ENCODE measurements at regions of chr12 and their contacts with region 1.

Region 1: GRCh38 chr12:22046090-22046967 is at the start of gene CMAS:
- DNase-seq: peak; percentile 62 to 78
- H3K4me3 ChIP-seq: peak within 1 kb of the TSS; percentile 60
- H3K27ac ChIP-seq: peak within 1 kb of the TSS; percentile 80
- H3K4me1 ChIP-seq: peaks cover 57% of the 10 kb centered on the region
- H3K27me3 ChIP-seq: no peaks in the 10 kb centered on the region
- CTCF ChIP-seq: no peak
- total RNA-seq, gene CMAS: 79.1 and 93.2 TPM in 2 replicates

Region 2: GRCh38 chr12:22544038-22544979 is 498.0 kb after region 1 on chr12 and contains the start of gene C2CD5:
- CTCF ChIA-PET with region 1: no interaction called
- POLR2A ChIA-PET with region 1: no interaction called
- intact Hi-C with region 1: loop called (anchors 5 kb)
- DNase-seq: peak; percentile 90 to 97
- H3K4me3 ChIP-seq: peak within 1 kb of the TSS; percentile 82
- H3K27ac ChIP-seq: peak within 1 kb of the TSS; percentile 71
- H3K4me1 ChIP-seq: peaks cover 9% of the 10 kb centered on the region; the same call in 1 of the 2 replicates
- H3K27me3 ChIP-seq: no peaks in the 10 kb centered on the region
- CTCF ChIP-seq: peak; percentile 32; the same call in 1 of the 2 replicates
- total RNA-seq, gene C2CD5: 27.5 and 28.6 TPM in 2 replicates

Region 3: DNA sequence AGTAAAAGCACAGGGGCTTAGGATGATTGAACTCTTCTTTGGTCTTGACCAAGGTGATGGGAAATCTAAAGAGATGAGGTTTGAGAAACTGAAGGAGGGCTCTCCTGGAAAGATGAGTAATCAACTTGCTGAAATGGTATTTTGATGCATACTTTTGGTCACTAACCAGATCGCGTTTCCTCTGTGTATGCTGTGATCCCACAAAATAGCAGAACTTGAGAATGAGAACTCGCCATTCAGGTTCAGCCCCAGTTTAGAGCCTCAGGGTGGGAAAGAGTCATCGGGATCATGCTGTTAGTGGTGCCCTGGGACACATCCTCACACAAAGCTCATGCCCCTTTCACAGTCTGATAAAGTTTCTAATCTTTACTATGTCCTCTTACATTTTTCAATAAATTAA is 1067.5 kb after region 1 on chr12:
- CTCF ChIA-PET with region 1: no interaction called
- POLR2A ChIA-PET with region 1: no interaction called
- intact Hi-C with region 1: no loop called
- DNase-seq: no peak
- H3K4me3 ChIP-seq: no peak overlapping the region
- H3K27ac ChIP-seq: no peak overlapping the region
- H3K4me1 ChIP-seq: no peaks in the 10 kb centered on the region
- H3K27me3 ChIP-seq: no peaks in the 10 kb centered on the region
- CTCF ChIP-seq: no peak

Measured in PC-9 (cell line).